ENCODE measurements at regions of chr11 and their contacts with region 1.

Region 1: GRCh38 chr11:108302121-108302785 is 79.4 kb downstream of the ATM start:
- DNase-seq: no peak
- H3K4me3 Mint-ChIP-seq: no peak overlapping the region
- H3K27ac Mint-ChIP-seq: peak overlapping the region; percentile 50
- H3K4me1 Mint-ChIP-seq: peaks cover 36% of the 10 kb centered on the region
- H3K27me3 Mint-ChIP-seq: no peaks in the 10 kb centered on the region

Region 2: DNA sequence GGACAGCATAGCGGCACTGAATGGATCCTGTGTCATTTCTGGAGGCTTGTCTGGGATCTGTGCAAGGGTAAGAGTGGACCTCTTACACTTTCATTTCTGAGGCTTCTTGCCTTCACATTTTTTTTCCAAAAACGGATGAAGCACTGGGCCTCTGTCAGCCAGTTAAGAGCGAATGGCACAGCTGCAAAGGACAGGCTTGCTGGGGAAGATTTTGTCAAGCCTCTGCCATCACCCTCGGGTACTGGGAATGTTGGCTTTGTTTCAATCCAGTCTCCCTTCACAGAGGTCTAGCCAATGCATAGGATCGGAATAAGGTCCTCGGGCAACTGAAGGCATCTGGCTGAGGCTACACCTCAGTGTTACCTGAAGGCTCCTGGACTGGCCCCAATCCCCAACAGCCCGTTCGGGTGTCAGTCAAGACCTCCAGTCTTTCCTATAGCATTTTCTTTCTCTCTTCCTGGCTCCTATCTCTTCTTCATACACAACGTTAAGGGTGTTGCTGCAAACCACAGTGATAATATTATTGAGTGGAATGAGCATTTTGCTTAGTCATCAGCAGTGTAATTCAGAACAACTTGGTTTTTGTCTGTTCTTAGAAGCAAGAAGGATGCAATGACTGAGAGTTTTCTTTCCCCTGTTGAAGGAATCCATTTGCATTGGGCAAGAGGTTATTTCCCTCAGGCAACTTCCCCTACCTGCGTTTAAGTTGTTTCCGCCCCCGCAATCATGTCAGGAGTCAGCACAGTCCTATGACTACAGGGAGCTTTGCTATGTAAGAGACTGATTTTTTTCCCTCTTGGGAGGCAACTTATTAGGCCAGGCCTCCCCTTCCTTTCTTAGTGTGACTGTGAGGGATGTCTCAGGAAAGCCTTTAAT is 102.6 kb before region 1 on chr11:
- CTCF ChIA-PET with region 1: no interaction called
- intact Hi-C with region 1: loop called (anchors 1 kb)
- DNase-seq: peak; percentile 94
- H3K4me3 Mint-ChIP-seq: no peak overlapping the region
- H3K27ac Mint-ChIP-seq: peak overlapping the region; percentile 48
- H3K4me1 Mint-ChIP-seq: peaks cover 86% of the 10 kb centered on the region
- H3K27me3 Mint-ChIP-seq: no peaks in the 10 kb centered on the region

Region 3: DNA sequence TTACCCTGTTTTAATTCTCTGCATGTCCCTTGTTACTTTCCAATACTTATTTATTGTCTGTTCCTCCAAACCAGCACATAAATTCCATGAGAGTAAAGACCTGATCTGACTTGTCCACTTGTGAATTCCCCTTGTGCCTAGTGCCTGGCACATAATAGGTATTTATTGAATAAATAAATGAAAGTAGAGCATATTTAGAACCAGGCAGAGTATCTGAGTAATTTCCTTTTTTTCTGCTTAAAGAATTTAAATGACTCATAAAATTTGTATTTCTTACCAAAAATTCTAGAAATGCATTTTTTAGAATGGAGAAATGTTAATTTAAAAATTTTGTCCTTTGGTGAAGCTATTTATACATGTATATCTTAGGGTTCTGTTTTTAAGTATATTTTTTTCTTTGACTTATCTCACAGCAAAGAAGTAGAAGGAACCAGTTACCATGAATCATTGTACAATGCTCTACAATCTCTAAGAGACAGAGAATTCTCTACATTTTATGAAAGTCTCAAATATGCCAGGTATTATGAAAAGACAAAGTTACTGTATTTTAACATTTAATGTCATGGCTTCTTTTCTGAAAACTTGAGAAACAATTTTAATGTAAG is 17.4 kb after region 1 on chr11:
- CTCF ChIA-PET with region 1: no interaction called
- intact Hi-C with region 1: loop called (anchors 1 kb)
- DNase-seq: no peak
- H3K4me3 Mint-ChIP-seq: no peak overlapping the region
- H3K27ac Mint-ChIP-seq: peak overlapping the region; percentile 75
- H3K4me1 Mint-ChIP-seq: peaks cover 14% of the 10 kb centered on the region
- H3K27me3 Mint-ChIP-seq: no peaks in the 10 kb centered on the region